CD4-positive, alpha-beta memory T cell (primary cell): ENCODE measurements at regions of chr14 and their contacts with region 1.

Region 1: GRCh38 chr14:100239840-100240724 is 1.1 kb downstream of the YY1 start:
- DNase-seq: peak; percentile 86 to 91 (median 88)
- H3K4me3 ChIP-seq: peak overlapping the region; percentile 42 to 92
- H3K4me3 Mint-ChIP-seq: peak overlapping the region; percentile 86 to 96 (median 92)
- H3K27ac ChIP-seq: peak overlapping the region; percentile 84
- H3K27ac Mint-ChIP-seq: peak overlapping the region; percentile 95 to 98 (median 96)
- H3K4me1 ChIP-seq: peaks cover 67% of the 10 kb centered on the region
- H3K4me1 Mint-ChIP-seq: peaks cover 37 to 65% (median 48%) of the 10 kb centered on the region in 4 donors
- H3K27me3 ChIP-seq: no peaks in the 10 kb centered on the region
- H3K27me3 Mint-ChIP-seq: no peaks in the 10 kb centered on the region

Region 2: GRCh38 chr14:99971087-99971940 is 268.8 kb before region 1 on chr14:
- CTCF ChIA-PET with region 1: no interaction called
- POLR2A ChIA-PET with region 1: no interaction called
- intact Hi-C with region 1: loop called (anchors 1 kb)
- DNase-seq: peak; percentile 77 to 83 (median 80)
- H3K4me3 ChIP-seq: peak overlapping the region in 1 of 2 donors; percentile 64
- H3K4me3 Mint-ChIP-seq: peak overlapping the region; percentile 56 to 81 (median 74)
- H3K27ac ChIP-seq: no peak overlapping the region
- H3K27ac Mint-ChIP-seq: peak overlapping the region in 1 of 7 donors; percentile 68
- H3K4me1 ChIP-seq: peaks cover 13% of the 10 kb centered on the region
- H3K4me1 Mint-ChIP-seq: peaks cover 7 to 17% (median 13%) of the 10 kb centered on the region in 4 donors
- H3K27me3 ChIP-seq: no peaks in the 10 kb centered on the region
- H3K27me3 Mint-ChIP-seq: peaks cover 5 to 14% of the 10 kb centered on the region in 2 donors

Region 3: GRCh38 chr14:100213956-100214774 is 25.9 kb before region 1 on chr14:
- CTCF ChIA-PET with region 1: interaction called, 25 read pairs
- POLR2A ChIA-PET with region 1: interaction called, 306 read pairs
- intact Hi-C with region 1: loop called (anchors 1 kb)
- DNase-seq: peak; percentile 87 to 90 (median 89)
- H3K4me3 ChIP-seq: peak overlapping the region; percentile 36 to 86
- H3K4me3 Mint-ChIP-seq: peak overlapping the region; percentile 77 to 85 (median 82)
- H3K27ac ChIP-seq: peak overlapping the region; percentile 85
- H3K27ac Mint-ChIP-seq: peak overlapping the region; percentile 75 to 96 (median 96)
- H3K4me1 ChIP-seq: peaks cover 26% of the 10 kb centered on the region
- H3K4me1 Mint-ChIP-seq: peaks cover 12 to 41% (median 25%) of the 10 kb centered on the region in 4 donors
- H3K27me3 ChIP-seq: no peaks in the 10 kb centered on the region
- H3K27me3 Mint-ChIP-seq: no peaks in the 10 kb centered on the region

Region 4: GRCh38 chr14:100285021-100285912 is 45.2 kb after region 1 on chr14:
- CTCF ChIA-PET with region 1: interaction called, 14 read pairs
- POLR2A ChIA-PET with region 1: interaction called, 4 read pairs
- intact Hi-C with region 1: loop called (anchors 1 kb)
- DNase-seq: peak; percentile 78 to 83 (median 80)
- H3K4me3 ChIP-seq: peak overlapping the region in 1 of 2 donors; percentile 85
- H3K4me3 Mint-ChIP-seq: peak overlapping the region in 6 of 8 donors; percentile 64 to 83 (median 72)
- H3K27ac ChIP-seq: peak overlapping the region; percentile 83
- H3K27ac Mint-ChIP-seq: peak overlapping the region in 3 of 7 donors; percentile 60 to 83 (median 78)
- H3K4me1 ChIP-seq: peaks cover 13% of the 10 kb centered on the region
- H3K4me1 Mint-ChIP-seq: peaks cover 3 to 16% (median 6%) of the 10 kb centered on the region in 4 donors
- H3K27me3 ChIP-seq: no peaks in the 10 kb centered on the region
- H3K27me3 Mint-ChIP-seq: no peaks in the 10 kb centered on the region